ENCODE measurements at regions of chr1 and their contacts with region 1.

Region 1: GRCh38 chr1:209674957-209675564 is at the start of gene G0S2:
- DNase-seq: peak; percentile 68
- H3K4me3 Mint-ChIP-seq: peak within 1 kb of the TSS; percentile 87
- H3K27ac Mint-ChIP-seq: peak within 1 kb of the TSS; percentile 92
- H3K4me1 Mint-ChIP-seq: peaks cover 59% of the 10 kb centered on the region
- H3K27me3 Mint-ChIP-seq: peaks cover 19% of the 10 kb centered on the region
- total RNA-seq, gene G0S2: 138 to 139 TPM

Region 2: GRCh38 chr1:209651148-209651547 is 23.9 kb before region 1 on chr1:
- CTCF ChIA-PET with region 1: interaction called, 6 read pairs
- intact Hi-C with region 1: loop called (anchors 1 kb)
- DNase-seq: peak; percentile 89
- H3K4me3 Mint-ChIP-seq: peak overlapping the region; percentile 36
- H3K27ac Mint-ChIP-seq: peak overlapping the region; percentile 25
- H3K4me1 Mint-ChIP-seq: peaks cover 50% of the 10 kb centered on the region
- H3K27me3 Mint-ChIP-seq: no peaks in the 10 kb centered on the region

Region 3: GRCh38 chr1:209685821-209686220 is 10.8 kb after region 1 on chr1:
- CTCF ChIA-PET with region 1: interaction called, 10 read pairs
- intact Hi-C with region 1: loop called (anchors 1 kb)
- DNase-seq: peak; percentile 74
- H3K4me3 Mint-ChIP-seq: peak overlapping the region; percentile 28
- H3K27ac Mint-ChIP-seq: no peak overlapping the region
- H3K4me1 Mint-ChIP-seq: peaks cover 47% of the 10 kb centered on the region
- H3K27me3 Mint-ChIP-seq: no peaks in the 10 kb centered on the region

Region 4: DNA sequence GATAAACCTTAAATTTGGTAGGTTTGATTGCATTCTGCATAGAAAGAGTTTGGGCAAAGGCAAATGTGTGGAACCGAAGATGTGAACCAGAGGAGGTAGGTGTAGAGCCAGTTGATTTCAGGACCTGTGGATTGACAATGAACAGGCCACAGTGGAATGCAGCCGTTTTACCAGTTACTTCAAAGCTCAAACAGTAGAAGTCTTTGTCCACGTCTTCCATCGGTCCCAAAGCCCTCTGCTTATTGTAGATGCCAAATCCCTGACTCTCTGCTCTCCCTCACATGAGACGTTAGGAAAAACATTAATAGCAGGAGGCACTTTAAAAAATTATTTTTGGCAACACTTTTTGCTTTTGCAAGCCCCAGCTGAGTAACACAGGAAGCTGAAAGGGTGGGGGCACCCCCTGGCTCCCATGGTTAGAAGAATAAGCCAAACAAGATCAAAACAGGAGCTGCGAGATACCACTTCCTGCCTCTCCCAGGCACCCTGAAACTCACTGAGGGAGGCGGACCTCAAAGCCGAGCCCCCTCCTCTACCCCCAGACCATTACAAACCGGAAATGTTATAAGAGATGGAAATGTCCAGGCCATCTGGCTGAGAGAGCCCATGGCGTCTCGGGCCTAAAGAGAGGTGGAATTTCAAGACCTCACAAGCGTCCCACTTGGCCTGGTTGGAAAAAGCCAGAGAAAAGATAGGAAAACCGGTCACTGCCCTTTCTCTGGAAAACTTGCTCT is 94.3 kb after region 1 on chr1:
- CTCF ChIA-PET with region 1: interaction called, 3 read pairs
- intact Hi-C with region 1: loop called (anchors 1 kb)
- DNase-seq: peak; percentile 92
- H3K4me3 Mint-ChIP-seq: no peak overlapping the region
- H3K27ac Mint-ChIP-seq: no peak overlapping the region
- H3K4me1 Mint-ChIP-seq: peaks cover 10% of the 10 kb centered on the region
- H3K27me3 Mint-ChIP-seq: no peaks in the 10 kb centered on the region

Measured in activated naive CD4-positive, alpha-beta T cell treated with anti-CD3 and anti-CD28 coated beads for 36 hours (primary cell).